ENCODE measurements at regions of chr5 and their contacts with region 1.

Region 1: DNA sequence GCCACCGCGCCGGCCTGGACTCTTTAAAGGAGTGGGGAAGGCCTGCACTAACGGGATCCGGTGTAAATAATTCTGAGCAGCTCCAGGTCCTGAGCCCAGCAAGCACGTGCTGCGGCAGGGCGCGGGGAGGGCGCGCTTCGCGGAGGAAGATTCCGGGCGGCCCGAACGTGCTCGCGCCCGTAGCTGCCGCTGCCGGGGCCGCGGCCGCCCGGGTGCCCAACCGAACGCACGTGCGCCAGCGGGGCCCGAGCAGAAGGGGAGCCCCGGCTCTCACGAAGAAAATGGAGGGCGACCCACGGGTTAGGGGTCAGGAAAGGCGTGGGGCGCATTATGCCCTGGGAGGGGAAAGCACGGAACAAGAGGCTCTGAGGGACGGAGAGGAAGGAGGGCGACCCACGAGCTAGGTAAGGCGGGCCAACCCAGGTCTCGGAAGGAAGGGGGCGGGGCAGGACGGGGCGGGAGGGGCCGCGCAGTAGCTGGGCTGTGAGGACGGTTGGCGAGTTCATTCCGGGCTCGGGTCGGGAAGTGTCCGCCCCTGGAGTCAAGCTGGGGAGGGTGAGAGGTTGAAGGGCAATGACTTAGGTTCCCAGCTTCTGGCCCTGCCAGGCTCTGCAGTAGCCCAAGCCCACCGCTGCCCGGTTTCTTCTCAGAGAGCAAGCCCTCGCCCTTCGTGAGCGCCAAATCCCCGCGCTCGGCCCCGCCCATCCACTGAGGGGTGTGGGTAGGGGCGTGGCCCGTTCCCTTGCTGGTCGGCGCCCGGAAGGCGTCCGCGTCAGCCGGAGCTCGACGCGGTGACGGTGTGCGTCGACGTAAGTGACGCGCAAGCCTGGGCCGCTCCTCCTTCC is at the start of gene ZNF131:
- DNase-seq: peak; percentile 92 to 99 (median 97)
- ATAC-seq: peak; percentile 84
- H3K4me3 ChIP-seq: peak within 1 kb of the TSS; percentile 91
- H3K4me3 Mint-ChIP-seq: peak within 1 kb of the TSS; percentile 97
- H3K27ac ChIP-seq: peak within 1 kb of the TSS; percentile 93 to 94
- H3K27ac Mint-ChIP-seq: peak within 1 kb of the TSS; percentile 94
- H3K4me1 ChIP-seq: peaks cover 30% of the 10 kb centered on the region
- H3K4me1 Mint-ChIP-seq: peaks cover 39% of the 10 kb centered on the region
- H3K27me3 ChIP-seq: no peaks in the 10 kb centered on the region
- H3K27me3 Mint-ChIP-seq: no peaks in the 10 kb centered on the region
- CTCF ChIP-seq: no peak
- total RNA-seq, gene ZNF131: 71.7 to 72.4 TPM

Region 2: GRCh38 chr5:42908509-42909488 is 212.1 kb before region 1 on chr5:
- CTCF ChIA-PET with region 1: interaction called, 7 read pairs
- POLR2A ChIA-PET with region 1: interaction called, 42 read pairs
- intact Hi-C with region 1: loop called (anchors 5 kb)
- DNase-seq: peak; percentile 80 to 96 (median 90)
- ATAC-seq: peak; percentile 94
- H3K4me3 ChIP-seq: peak overlapping the region; percentile 68
- H3K4me3 Mint-ChIP-seq: peak overlapping the region; percentile 93
- H3K27ac ChIP-seq: no peak overlapping the region
- H3K27ac Mint-ChIP-seq: peak overlapping the region; percentile 91
- H3K4me1 ChIP-seq: peaks cover 12% of the 10 kb centered on the region
- H3K4me1 Mint-ChIP-seq: peaks cover 24% of the 10 kb centered on the region
- H3K27me3 ChIP-seq: peaks cover 4 to 16% of the 10 kb centered on the region in 2 experiments
- H3K27me3 Mint-ChIP-seq: peaks cover 15% of the 10 kb centered on the region
- CTCF ChIP-seq: peak; percentile 89

Region 3: DNA sequence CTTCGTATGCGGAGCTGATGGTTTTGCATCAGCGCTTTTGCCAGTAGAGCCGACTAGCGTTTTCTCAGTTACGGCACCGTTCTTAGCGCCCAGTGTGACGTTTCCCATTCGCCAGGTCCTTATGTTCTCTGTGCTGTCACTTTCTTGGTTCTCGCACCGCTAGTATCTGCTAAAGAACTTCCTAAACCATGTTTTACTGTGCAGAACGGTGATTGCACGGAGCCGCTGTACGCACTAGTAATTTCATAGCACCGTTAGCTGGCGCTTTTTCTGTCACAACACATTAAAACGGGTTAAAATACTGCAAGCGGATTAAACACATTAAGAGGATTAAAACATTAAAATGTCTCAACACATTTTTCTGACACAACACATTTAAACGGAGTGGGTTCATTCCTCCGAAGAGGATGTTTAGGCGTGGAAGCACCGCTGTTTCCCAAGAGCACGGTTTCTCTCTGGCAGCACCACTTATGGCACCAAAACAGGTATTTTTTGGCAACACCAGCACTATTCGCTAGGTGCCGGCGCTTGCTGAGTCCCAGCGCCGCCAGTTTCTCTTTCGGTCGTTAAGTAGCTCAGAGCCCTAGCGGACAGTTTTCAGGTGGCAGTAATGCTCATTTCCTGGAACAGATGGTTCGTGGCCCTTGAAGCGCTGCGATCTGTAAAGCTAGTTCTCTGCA is 101.2 kb before region 1 on chr5:
- CTCF ChIA-PET with region 1: interaction called, 9 read pairs
- POLR2A ChIA-PET with region 1: interaction called, 181 read pairs
- intact Hi-C with region 1: no loop called
- DNase-seq: peak; percentile 73 to 97 (median 84)
- ATAC-seq: peak; percentile 61
- H3K4me3 ChIP-seq: peak overlapping the region; percentile 80
- H3K4me3 Mint-ChIP-seq: peak overlapping the region; percentile 99
- H3K27ac ChIP-seq: peak overlapping the region; percentile 98
- H3K27ac Mint-ChIP-seq: peak overlapping the region; percentile 100
- H3K4me1 ChIP-seq: peaks cover 42% of the 10 kb centered on the region
- H3K4me1 Mint-ChIP-seq: peaks cover 57% of the 10 kb centered on the region
- H3K27me3 ChIP-seq: no peaks in the 10 kb centered on the region
- H3K27me3 Mint-ChIP-seq: no peaks in the 10 kb centered on the region
- CTCF ChIP-seq: peak; percentile 69

Region 4: DNA sequence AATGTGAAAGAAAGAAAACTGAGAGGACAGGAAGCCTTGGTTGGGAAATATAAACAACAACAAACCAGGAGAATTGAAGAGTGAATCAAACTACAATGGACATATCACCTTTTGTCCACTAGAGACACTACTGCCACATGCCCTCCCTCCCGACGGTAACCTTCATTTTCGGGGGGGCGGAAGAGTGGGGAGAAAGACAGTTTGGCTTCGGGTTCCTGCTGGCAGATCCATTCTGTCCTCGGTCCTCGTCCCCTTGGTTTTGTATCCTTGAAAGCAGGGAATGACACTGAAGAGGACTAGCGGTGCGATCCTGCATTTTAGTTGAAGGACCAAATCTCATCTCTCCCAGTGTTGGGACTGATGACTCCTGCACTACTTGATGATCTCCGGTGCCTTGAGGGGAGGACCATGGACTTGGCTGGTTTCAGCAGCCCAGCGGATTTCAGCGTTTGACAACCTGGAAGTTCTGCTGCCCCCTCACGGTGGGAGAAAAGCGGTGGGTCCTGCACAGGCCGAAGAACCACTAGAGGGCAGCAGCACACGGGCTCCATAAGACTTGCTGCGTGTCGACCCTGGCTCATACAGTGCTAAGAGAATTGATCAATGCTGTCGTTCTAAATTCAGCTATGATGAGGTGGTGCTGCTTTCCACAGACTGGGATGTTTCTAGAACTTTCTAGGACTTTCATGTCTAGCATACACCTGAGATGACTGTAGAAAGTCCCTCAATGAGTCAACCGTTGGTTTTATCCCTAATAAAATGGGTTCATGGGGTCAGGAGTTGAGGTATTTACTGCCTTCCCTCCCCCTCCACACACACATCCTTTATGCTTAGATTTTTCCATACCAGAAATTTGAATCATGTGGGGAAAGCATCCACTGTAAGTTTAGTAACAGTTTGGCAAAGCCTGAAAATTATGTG is 15.3 kb before region 1 on chr5:
- CTCF ChIA-PET with region 1: interaction called, 49 read pairs
- POLR2A ChIA-PET with region 1: interaction called, 209 read pairs
- intact Hi-C with region 1: loop called (anchors 1 to 2 kb)
- DNase-seq: peak; percentile 85 to 97 (median 88)
- ATAC-seq: peak; percentile 90
- H3K4me3 ChIP-seq: peak overlapping the region; percentile 51
- H3K4me3 Mint-ChIP-seq: peak overlapping the region; percentile 91
- H3K27ac ChIP-seq: no peak overlapping the region
- H3K27ac Mint-ChIP-seq: peak overlapping the region; percentile 78
- H3K4me1 ChIP-seq: peaks cover 36% of the 10 kb centered on the region
- H3K4me1 Mint-ChIP-seq: peaks cover 41% of the 10 kb centered on the region
- H3K27me3 ChIP-seq: no peaks in the 10 kb centered on the region
- H3K27me3 Mint-ChIP-seq: no peaks in the 10 kb centered on the region
- CTCF ChIP-seq: peak; percentile 100

Region 5: DNA sequence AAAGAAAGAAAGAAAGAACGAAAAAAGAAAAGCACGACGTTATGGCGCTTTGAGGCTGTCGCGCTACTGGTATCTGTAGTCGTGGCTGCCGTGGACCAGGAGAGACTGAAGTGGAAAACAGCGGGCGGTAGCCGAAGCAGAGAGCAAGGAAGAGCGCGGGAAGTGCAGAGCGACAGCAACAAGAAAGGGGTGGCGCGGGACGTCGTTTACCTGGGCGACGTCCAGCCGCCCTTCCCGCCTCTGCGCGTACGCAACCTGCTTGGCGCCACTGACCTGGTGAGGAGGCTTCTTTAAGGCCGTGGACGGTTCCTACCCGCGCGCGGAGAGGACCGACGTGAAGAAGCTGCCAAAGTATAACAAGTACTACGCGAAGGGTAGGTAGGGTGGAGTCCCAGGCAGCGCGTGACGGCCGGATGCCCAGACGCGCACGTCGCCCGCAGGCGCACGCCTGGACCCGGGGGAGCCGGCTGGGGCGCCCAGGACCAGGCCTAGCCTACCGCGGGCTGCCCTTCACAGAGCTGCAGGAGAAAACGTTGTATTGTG is 275.9 kb after region 1 on chr5:
- CTCF ChIA-PET with region 1: no interaction called
- POLR2A ChIA-PET with region 1: interaction called, 14 read pairs
- intact Hi-C with region 1: no loop called
- DNase-seq: peak; percentile 36 to 78 (median 55)
- ATAC-seq: peak; percentile 94
- H3K4me3 ChIP-seq: peak overlapping the region; percentile 86
- H3K4me3 Mint-ChIP-seq: peak overlapping the region; percentile 96
- H3K27ac ChIP-seq: peak overlapping the region; percentile 40 to 45
- H3K27ac Mint-ChIP-seq: peak overlapping the region; percentile 94
- H3K4me1 ChIP-seq: peaks cover 14% of the 10 kb centered on the region
- H3K4me1 Mint-ChIP-seq: peaks cover 32% of the 10 kb centered on the region
- H3K27me3 ChIP-seq: no peaks in the 10 kb centered on the region
- H3K27me3 Mint-ChIP-seq: no peaks in the 10 kb centered on the region
- CTCF ChIP-seq: no peak

Measured in CD4-positive, alpha-beta T cell (primary cell).